ENCODE measurements at regions of chr22 and their contacts with region 1.

Region 1: DNA sequence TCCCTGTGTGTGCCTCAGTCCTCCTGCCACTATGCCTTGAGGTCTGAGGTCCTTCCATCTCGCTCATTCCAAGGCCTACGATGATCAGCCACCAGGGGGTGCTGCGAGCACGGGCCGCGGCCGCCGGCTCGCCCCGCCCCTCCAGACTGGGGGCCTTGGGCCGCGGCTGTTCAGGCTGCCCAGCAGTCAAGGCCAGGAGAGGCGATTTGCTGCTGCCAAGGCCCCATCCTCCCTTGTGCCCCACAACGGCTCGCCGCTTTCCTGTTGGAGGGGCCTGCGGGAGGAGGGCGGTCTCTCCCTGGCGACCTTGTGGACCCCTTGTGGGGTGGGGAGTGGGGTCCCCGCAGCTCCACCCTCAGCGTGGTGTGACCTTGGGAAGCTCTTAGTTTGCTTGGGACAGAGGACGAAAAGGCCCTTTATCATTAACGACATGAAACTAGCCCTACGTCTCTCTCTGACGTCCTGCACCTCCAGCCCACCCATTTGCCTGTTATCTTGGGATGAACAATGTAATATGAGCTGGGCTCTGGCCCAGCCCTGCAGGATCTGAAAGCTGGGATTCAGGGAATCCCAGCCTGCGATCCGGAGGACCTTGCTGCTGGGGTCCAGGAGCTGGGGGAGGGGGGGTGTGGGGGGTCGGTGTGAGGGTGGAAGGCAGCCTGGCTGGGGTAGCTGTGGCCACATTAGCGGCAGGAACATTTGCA is 5.3 kb upstream of the GALR3 start:
- DNase-seq: peak; percentile 64 to 91
- H3K4me3 ChIP-seq: peak overlapping the region; percentile 44; the same call in 1 of the 2 replicates
- H3K27ac ChIP-seq: no peak overlapping the region
- H3K4me1 ChIP-seq: peaks cover 5% of the 10 kb centered on the region
- H3K27me3 ChIP-seq: no peaks in the 10 kb centered on the region
- CTCF ChIP-seq: peak; percentile 97

Region 2: GRCh38 chr22:37710675-37711074 is 107.2 kb before region 1 on chr22:
- CTCF ChIA-PET with region 1: no interaction called
- POLR2A ChIA-PET with region 1: interaction called, 11 read pairs
- intact Hi-C with region 1: no loop called
- DNase-seq: peak; percentile 58 to 79
- H3K4me3 ChIP-seq: no peak overlapping the region; the same call in 1 of the 2 replicates
- H3K27ac ChIP-seq: peak overlapping the region; percentile 38
- H3K4me1 ChIP-seq: peaks cover 21% of the 10 kb centered on the region
- H3K27me3 ChIP-seq: no peaks in the 10 kb centered on the region
- CTCF ChIP-seq: no peak

Region 3: GRCh38 chr22:37862570-37863325 is 44.9 kb after region 1 on chr22:
- CTCF ChIA-PET with region 1: interaction called, 22 read pairs
- POLR2A ChIA-PET with region 1: interaction called, 14 read pairs
- intact Hi-C with region 1: loop called (anchors 1 kb)
- DNase-seq: no peak
- H3K4me3 ChIP-seq: no peak overlapping the region
- H3K27ac ChIP-seq: no peak overlapping the region
- H3K4me1 ChIP-seq: no peaks in the 10 kb centered on the region
- H3K27me3 ChIP-seq: no peaks in the 10 kb centered on the region
- CTCF ChIP-seq: no peak

Region 4: DNA sequence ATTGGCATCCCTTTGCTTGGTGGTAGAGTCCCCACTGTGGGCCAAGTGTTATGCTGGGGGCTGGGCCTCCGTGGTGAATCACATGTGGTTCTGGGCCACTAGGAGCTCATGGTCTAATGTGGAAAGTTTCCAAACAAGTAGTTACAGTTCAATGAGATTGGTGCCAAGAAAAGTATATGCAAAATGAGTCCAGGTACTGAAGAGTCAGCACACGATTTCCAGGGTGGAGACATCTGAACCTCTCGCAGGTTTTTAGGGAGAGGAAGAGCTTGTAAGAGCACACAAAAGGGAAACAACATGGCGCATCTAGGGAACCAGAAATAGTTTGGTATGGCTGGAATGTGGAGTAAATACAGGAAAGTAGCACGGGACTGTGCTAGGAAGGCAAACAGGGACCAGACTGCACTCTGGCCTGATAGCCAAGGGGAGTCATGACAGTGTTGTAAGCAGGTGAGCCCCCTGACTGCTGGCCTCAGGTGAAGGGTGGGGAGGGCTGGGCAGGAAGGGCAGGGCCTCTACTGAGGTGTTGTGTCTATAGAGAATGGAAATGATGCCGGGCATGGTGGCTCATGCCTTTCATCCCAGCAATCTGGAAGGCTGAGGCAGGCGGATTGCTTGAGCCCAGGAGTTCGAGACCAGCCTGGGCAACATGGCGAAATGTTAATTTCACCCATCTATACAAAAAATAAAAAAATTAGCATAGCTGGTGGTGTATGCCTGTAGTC is 148.2 kb after region 1 on chr22:
- CTCF ChIA-PET with region 1: interaction called, 5 read pairs
- POLR2A ChIA-PET with region 1: no interaction called
- intact Hi-C with region 1: loop called (anchors 1 kb)
- DNase-seq: no peak
- H3K4me3 ChIP-seq: no peak overlapping the region
- H3K27ac ChIP-seq: no peak overlapping the region
- H3K4me1 ChIP-seq: no peaks in the 10 kb centered on the region
- H3K27me3 ChIP-seq: no peaks in the 10 kb centered on the region
- CTCF ChIP-seq: no peak